ENCODE measurements at regions of chr1 and their contacts with region 1.

Region 1: GRCh38 chr1:33025181-33025571 is 11.5 kb downstream of the AK2 start:
- DNase-seq: no peak
- H3K4me3 Mint-ChIP-seq: no peak overlapping the region
- H3K27ac Mint-ChIP-seq: peak overlapping the region; percentile 59
- H3K4me1 Mint-ChIP-seq: peaks cover 51% of the 10 kb centered on the region
- H3K27me3 Mint-ChIP-seq: no peaks in the 10 kb centered on the region

Region 2: GRCh38 chr1:32964461-32965250 is 60.5 kb before region 1 on chr1 and contains the start of gene RNF19B:
- intact Hi-C with region 1: loop called (anchors 2 kb)
- DNase-seq: peak; percentile 94
- H3K4me3 Mint-ChIP-seq: peak within 1 kb of the TSS; percentile 91
- H3K27ac Mint-ChIP-seq: peak within 1 kb of the TSS; percentile 74
- H3K4me1 Mint-ChIP-seq: peaks cover 49% of the 10 kb centered on the region
- H3K27me3 Mint-ChIP-seq: no peaks in the 10 kb centered on the region
- total RNA-seq, gene RNF19B: 50.4 and 52.5 TPM in 2 replicates

Measured in activated T-helper 2 cell treated with anti-CD3 and anti-CD28 coated beads, Interferon-gamma antibody, Interleukin-2, Interleukin-4, amounts not matched to agents 10 μg/mL and 5 μg/mL and 100 μg/mL, durations not matched to agents 14 hours and 24 hours and 36 hours (primary cell).